ENCODE measurements at regions of chr6 and their contacts with region 1.

Region 1: GRCh38 chr6:37653933-37654565 is 43.6 kb downstream of the MDGA1 start:
- DNase-seq: peak; percentile 73
- ATAC-seq: peak; percentile 50
- H3K4me3 Mint-ChIP-seq: no peak overlapping the region
- H3K27ac Mint-ChIP-seq: no peak overlapping the region
- H3K4me1 Mint-ChIP-seq: peaks cover 13% of the 10 kb centered on the region
- H3K27me3 Mint-ChIP-seq: peaks cover 39% of the 10 kb centered on the region
- CTCF ChIP-seq: peak; percentile 73

Region 2: GRCh38 chr6:37684801-37685200 is 30.8 kb after region 1 on chr6:
- CTCF ChIA-PET with region 1: interaction called, 12 read pairs
- POLR2A ChIA-PET with region 1: no interaction called
- DNase-seq: no peak
- ATAC-seq: no peak
- H3K4me3 Mint-ChIP-seq: no peak overlapping the region
- H3K27ac Mint-ChIP-seq: no peak overlapping the region
- H3K4me1 Mint-ChIP-seq: peaks cover 6% of the 10 kb centered on the region
- H3K27me3 Mint-ChIP-seq: no peaks in the 10 kb centered on the region; the same call in none of the 2 replicates
- CTCF ChIP-seq: no peak

Region 3: DNA sequence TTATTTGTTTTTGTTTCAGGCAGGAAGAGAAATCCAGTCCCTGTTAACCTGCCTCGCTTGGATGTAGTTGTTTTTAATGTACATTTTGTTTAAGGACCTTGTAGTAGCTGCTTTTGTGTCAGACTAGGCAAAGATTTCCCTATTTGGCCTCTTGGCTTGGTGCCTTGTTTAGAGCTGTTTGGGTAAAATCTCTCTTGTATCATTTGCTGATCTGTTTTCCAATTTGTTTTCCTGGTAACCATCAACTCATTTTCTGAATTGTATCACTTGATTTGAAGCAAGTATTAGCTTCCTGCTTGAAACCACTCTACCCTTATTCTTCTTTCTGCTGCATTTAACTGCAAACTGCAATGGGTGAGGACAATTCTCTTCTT is 326.2 kb after region 1 on chr6:
- CTCF ChIA-PET with region 1: no interaction called
- POLR2A ChIA-PET with region 1: no interaction called
- DNase-seq: no peak
- ATAC-seq: no peak
- H3K4me3 Mint-ChIP-seq: no peak overlapping the region
- H3K27ac Mint-ChIP-seq: peak overlapping the region; percentile 15; the same call in 1 of the 2 replicates
- H3K4me1 Mint-ChIP-seq: peaks cover 16% of the 10 kb centered on the region
- H3K27me3 Mint-ChIP-seq: no peaks in the 10 kb centered on the region
- CTCF ChIP-seq: no peak

Region 4: DNA sequence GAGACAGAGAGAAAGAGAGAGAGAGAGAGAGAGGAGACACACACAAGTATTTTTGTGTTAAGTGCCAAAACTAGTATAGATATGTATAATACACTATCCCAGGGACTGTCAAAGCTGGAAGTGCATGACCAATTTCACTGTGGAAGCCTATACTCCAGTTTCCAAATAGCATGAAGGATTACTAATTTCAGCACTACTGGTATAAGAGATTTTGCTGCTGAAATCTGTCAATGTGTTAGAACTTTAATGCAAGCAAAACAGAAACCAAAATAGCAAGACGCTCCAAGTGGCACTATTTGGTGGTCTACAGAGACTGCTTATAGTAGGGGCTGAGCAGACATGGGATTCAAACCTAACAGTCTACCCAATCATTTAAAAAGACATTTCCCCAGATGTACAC is 700.9 kb after region 1 on chr6:
- CTCF ChIA-PET with region 1: no interaction called
- POLR2A ChIA-PET with region 1: no interaction called
- DNase-seq: no peak
- ATAC-seq: no peak
- H3K4me3 Mint-ChIP-seq: no peak overlapping the region
- H3K27ac Mint-ChIP-seq: no peak overlapping the region
- H3K4me1 Mint-ChIP-seq: peaks cover 11% of the 10 kb centered on the region
- H3K27me3 Mint-ChIP-seq: no peaks in the 10 kb centered on the region
- CTCF ChIP-seq: no peak